ENCODE measurements at regions of chr1 and their contacts with region 1.

Region 1: DNA sequence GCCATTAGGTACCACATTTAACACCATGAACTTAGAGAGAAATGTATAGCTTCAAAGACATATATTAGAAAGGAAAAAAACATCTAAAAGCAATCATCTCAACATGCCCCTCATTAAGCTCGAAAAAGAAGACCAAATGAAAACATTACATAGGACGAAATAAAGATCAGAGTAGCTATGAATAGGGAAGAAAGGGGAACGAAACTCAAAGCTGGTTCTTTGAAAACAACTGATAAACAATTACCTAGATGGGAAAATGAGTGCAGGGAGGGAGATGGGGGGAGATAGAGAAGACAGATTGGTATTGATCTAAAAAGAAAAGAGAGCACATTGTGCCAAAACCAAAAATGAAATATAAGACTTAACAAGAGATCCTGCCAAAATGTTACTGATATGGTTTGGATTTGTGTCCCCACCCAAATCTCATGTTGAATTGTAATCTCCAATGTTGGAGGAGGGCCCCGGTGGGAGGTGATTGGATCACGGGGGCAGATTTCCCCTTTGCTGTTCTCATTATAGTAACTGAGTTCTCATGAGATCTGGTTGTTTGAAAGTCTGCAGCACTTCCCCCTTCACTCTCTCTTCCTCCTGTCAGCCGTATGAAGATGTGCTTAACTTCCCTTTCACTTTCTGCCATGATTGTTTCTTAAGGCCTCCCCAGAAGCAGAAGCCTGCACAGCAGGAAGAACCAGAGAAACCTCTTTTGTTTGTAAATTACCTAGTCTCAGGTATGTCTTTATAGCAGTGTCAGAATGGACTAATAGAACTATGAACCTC is 28.6 kb downstream of the TRIM33 start:
- DNase-seq: peak; percentile 85
- ATAC-seq: peak; percentile 92
- H3K4me3 ChIP-seq: peak overlapping the region in 3 of 5 experiments; percentile 8 to 48 (median 12)
- H3K4me3 Mint-ChIP-seq: peak overlapping the region; percentile 64
- H3K27ac ChIP-seq: peak overlapping the region; percentile 67 to 93
- H3K27ac Mint-ChIP-seq: peak overlapping the region; percentile 65
- H3K4me1 ChIP-seq: peaks cover 14 to 18% of the 10 kb centered on the region in 2 donors
- H3K4me1 Mint-ChIP-seq: peaks cover 46% of the 10 kb centered on the region
- H3K27me3 ChIP-seq: no peaks in the 10 kb centered on the region
- H3K27me3 Mint-ChIP-seq: no peaks in the 10 kb centered on the region
- CTCF ChIP-seq: no peak

Region 2: GRCh38 chr1:114435107-114435715 is 47.2 kb before region 1 on chr1:
- CTCF ChIA-PET with region 1: no interaction called
- POLR2A ChIA-PET with region 1: no interaction called
- intact Hi-C with region 1: no loop called
- DNase-seq: no peak
- ATAC-seq: no peak
- H3K4me3 ChIP-seq: no peak overlapping the region
- H3K4me3 Mint-ChIP-seq: no peak overlapping the region
- H3K27ac ChIP-seq: no peak overlapping the region
- H3K27ac Mint-ChIP-seq: no peak overlapping the region
- H3K4me1 ChIP-seq: no peaks in the 10 kb centered on the region
- H3K4me1 Mint-ChIP-seq: peaks cover 5% of the 10 kb centered on the region
- H3K27me3 ChIP-seq: no peaks in the 10 kb centered on the region
- H3K27me3 Mint-ChIP-seq: no peaks in the 10 kb centered on the region
- CTCF ChIP-seq: no peak

Region 3: GRCh38 chr1:114468710-114469468 is 13.5 kb before region 1 on chr1:
- CTCF ChIA-PET with region 1: no interaction called
- POLR2A ChIA-PET with region 1: no interaction called
- intact Hi-C with region 1: loop called (anchors 2 kb)
- DNase-seq: no peak
- ATAC-seq: no peak
- H3K4me3 ChIP-seq: no peak overlapping the region
- H3K4me3 Mint-ChIP-seq: no peak overlapping the region
- H3K27ac ChIP-seq: peak overlapping the region in 1 of 2 donors; percentile 3
- H3K27ac Mint-ChIP-seq: no peak overlapping the region
- H3K4me1 ChIP-seq: peaks cover 11 to 20% of the 10 kb centered on the region in 2 donors
- H3K4me1 Mint-ChIP-seq: peaks cover 55% of the 10 kb centered on the region
- H3K27me3 ChIP-seq: no peaks in the 10 kb centered on the region
- H3K27me3 Mint-ChIP-seq: no peaks in the 10 kb centered on the region
- CTCF ChIP-seq: no peak